ENCODE measurements at regions of chr12 and their contacts with region 1.

Region 1: GRCh38 chr12:45655201-45655600 is 74.3 kb upstream of the ARID2 start:
- DNase-seq: peak; percentile 33 to 87 (median 55)
- ATAC-seq: peak; percentile 100
- H3K4me3 ChIP-seq: no peak overlapping the region
- H3K4me3 Mint-ChIP-seq: no peak overlapping the region
- H3K27ac ChIP-seq: no peak overlapping the region
- H3K27ac Mint-ChIP-seq: no peak overlapping the region
- H3K4me1 ChIP-seq: no peaks in the 10 kb centered on the region
- H3K4me1 Mint-ChIP-seq: peaks cover 8% of the 10 kb centered on the region
- H3K27me3 ChIP-seq: peaks cover 0 to 8% of the 10 kb centered on the region in 2 experiments
- H3K27me3 Mint-ChIP-seq: peaks cover 12% of the 10 kb centered on the region
- CTCF ChIP-seq: no peak

Region 2: DNA sequence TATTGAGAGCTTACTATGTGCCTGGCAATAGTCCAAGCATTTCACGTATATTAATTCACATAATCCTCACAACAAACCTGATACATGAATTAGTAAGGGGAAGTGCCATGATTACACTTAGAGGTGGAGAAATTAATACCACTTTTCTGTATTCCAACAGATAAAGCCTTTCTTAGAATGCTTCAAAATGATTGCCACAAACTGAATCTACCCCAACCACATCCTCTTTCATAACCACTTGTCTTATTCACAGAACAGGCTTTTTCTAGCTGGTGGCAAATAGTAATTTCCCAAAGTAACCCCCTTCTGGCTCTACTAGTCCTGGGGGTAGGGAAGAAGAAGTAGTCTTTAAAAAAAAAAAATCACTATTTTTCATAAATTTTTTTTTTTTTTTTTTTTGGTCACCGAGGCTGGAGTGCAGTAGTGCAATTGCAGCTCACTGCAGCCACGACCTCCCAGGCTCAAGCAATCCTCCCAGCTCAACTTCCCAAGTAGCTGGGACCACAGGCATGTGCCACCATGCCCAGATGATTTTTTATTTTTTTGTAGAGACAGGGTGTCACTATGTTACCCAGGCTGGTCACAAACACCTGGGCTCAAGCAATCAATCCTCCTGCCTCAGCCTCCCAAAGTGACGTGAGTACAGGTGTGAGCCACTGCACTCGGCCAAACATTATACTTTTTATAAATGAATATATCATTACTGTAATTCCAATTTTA is 15.3 kb after region 1 on chr12:
- CTCF ChIA-PET with region 1: interaction called, 6 read pairs
- POLR2A ChIA-PET with region 1: interaction called, 5 read pairs
- intact Hi-C with region 1: loop called in 1 of 2 experiments (anchors 1 kb)
- DNase-seq: peak in 3 of 14 experiments; percentile 57 to 86 (median 62)
- ATAC-seq: peak; percentile 79
- H3K4me3 ChIP-seq: no peak overlapping the region
- H3K4me3 Mint-ChIP-seq: peak overlapping the region; percentile 4
- H3K27ac ChIP-seq: no peak overlapping the region
- H3K27ac Mint-ChIP-seq: no peak overlapping the region
- H3K4me1 ChIP-seq: peaks cover 14% of the 10 kb centered on the region
- H3K4me1 Mint-ChIP-seq: peaks cover 27% of the 10 kb centered on the region
- H3K27me3 ChIP-seq: no peaks in the 10 kb centered on the region
- H3K27me3 Mint-ChIP-seq: no peaks in the 10 kb centered on the region
- CTCF ChIP-seq: no peak

Region 3: GRCh38 chr12:45718306-45718705 is 63.1 kb after region 1 on chr12:
- CTCF ChIA-PET with region 1: interaction called, 4 read pairs
- POLR2A ChIA-PET with region 1: no interaction called
- intact Hi-C with region 1: loop called in 1 of 2 experiments (anchors 5 kb)
- DNase-seq: no peak
- ATAC-seq: no peak
- H3K4me3 ChIP-seq: no peak overlapping the region
- H3K4me3 Mint-ChIP-seq: no peak overlapping the region
- H3K27ac ChIP-seq: no peak overlapping the region
- H3K27ac Mint-ChIP-seq: peak overlapping the region; percentile 69
- H3K4me1 ChIP-seq: peaks cover 18% of the 10 kb centered on the region
- H3K4me1 Mint-ChIP-seq: peaks cover 64% of the 10 kb centered on the region
- H3K27me3 ChIP-seq: no peaks in the 10 kb centered on the region
- H3K27me3 Mint-ChIP-seq: no peaks in the 10 kb centered on the region
- CTCF ChIP-seq: no peak

Measured in CD4-positive, alpha-beta T cell (primary cell).